Activated CD4-positive, alpha-beta memory T cell treated with anti-CD3 and anti-CD28 coated beads, Interleukin-2, amount 10 ng/mL, durations not matched to agents 7 days and 5 days (primary cell): ENCODE measurements at regions of chr13 and their contacts with region 1.

Region 1: GRCh38 chr13:23888658-23889614 is at the start of gene MIPEP:
- DNase-seq: peak; percentile 91
- H3K4me3 Mint-ChIP-seq: peak within 1 kb of the TSS; percentile 89
- H3K27ac Mint-ChIP-seq: peak within 1 kb of the TSS; percentile 63
- H3K4me1 Mint-ChIP-seq: peaks cover 28% of the 10 kb centered on the region
- H3K27me3 Mint-ChIP-seq: no peaks in the 10 kb centered on the region
- total RNA-seq, gene MIPEP: 8.6 to 8.8 TPM

Region 2: DNA sequence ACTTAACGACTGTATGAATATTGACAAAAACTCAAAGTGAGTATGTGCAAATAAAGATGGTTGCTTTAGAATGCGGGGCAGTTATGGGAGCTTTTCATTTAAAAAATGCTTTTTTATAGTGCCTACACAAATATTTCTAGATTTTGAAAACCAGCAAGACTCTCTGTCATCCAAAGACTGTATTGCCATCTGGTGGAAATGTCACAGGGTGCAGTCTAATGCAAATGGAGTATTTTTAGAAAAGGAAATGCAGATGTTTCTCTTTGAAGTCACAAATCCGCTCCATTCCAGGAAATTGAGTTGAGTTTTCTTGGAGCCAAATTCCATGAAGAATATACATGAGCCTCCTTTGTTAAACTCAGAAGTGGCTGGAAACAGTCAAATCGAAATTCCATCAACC is 10.6 kb after region 1 on chr13:
- CTCF ChIA-PET with region 1: interaction called, 21 read pairs
- POLR2A ChIA-PET with region 1: no interaction called
- DNase-seq: peak; percentile 43
- H3K4me3 Mint-ChIP-seq: no peak overlapping the region
- H3K27ac Mint-ChIP-seq: no peak overlapping the region
- H3K4me1 Mint-ChIP-seq: peaks cover 20% of the 10 kb centered on the region
- H3K27me3 Mint-ChIP-seq: peaks cover 34% of the 10 kb centered on the region